Activated naive CD4-positive, alpha-beta T cell treated with anti-CD3 and anti-CD28 coated beads for 36 hours (primary cell): ENCODE measurements at regions of chr18 and their contacts with region 1.

Region 1: DNA sequence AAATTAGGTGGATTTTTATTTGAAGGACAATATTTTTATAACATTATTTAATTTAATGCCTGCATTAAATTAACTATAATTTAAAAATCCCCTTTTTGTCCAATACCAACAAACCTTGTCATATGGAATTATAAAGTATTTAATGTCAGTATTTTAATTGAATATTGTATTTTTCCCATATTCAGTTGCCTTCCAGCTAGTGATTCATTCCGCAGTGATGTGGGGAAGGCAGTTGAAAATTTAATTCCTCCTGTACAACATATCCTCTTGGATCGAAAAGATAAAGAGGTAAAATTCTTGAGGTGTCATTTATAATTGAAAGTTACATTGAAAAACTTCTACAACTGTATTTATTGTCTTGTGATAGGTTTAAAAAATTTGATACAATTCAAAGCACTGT is 40.4 kb downstream of the WDR7 start:
- DNase-seq: no peak
- H3K4me3 Mint-ChIP-seq: no peak overlapping the region
- H3K27ac Mint-ChIP-seq: no peak overlapping the region
- H3K4me1 Mint-ChIP-seq: no peaks in the 10 kb centered on the region
- H3K27me3 Mint-ChIP-seq: no peaks in the 10 kb centered on the region

Region 2: DNA sequence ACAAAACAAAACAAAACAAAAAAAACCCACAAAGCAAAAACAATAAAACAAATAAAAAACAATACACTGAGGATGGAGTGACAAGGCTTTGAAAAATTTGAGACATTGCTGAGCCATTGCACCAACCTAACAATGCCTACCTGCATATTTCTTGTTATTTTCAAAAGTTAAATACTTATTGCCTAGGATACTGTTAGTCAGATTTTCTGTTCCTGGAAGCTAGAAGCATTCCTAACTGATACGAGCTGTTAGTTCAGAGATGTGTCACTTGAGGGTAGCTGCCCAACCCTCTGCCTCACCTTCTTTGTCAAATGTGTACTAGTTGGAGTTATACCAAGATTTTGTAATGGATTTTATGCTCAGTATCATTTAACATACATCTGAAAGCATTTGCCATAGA is 240.3 kb before region 1 on chr18:
- CTCF ChIA-PET with region 1: no interaction called
- intact Hi-C with region 1: no loop called
- DNase-seq: no peak
- H3K4me3 Mint-ChIP-seq: no peak overlapping the region
- H3K27ac Mint-ChIP-seq: no peak overlapping the region
- H3K4me1 Mint-ChIP-seq: no peaks in the 10 kb centered on the region
- H3K27me3 Mint-ChIP-seq: peaks cover 3% of the 10 kb centered on the region

Region 3: DNA sequence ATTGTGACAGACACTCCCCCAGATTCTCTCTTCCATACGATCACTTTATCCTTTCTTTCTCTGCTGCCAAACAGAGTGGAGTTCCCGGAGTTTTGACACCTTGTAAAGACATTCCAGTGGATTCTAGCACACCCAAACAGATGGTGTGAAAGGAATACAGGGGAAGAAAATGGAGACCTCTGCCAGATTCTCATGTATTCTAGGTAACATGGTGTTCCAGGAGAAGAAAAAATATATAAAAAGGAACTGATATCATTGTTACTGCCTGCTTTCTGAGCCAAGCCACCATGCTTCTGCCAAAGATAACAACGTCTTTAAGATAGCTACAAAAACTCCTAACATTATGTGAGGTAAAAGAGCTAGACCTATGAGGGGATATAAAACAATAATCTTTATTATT is 189.6 kb before region 1 on chr18:
- CTCF ChIA-PET with region 1: no interaction called
- intact Hi-C with region 1: loop called (anchors 5 kb)
- DNase-seq: no peak
- H3K4me3 Mint-ChIP-seq: no peak overlapping the region
- H3K27ac Mint-ChIP-seq: no peak overlapping the region
- H3K4me1 Mint-ChIP-seq: no peaks in the 10 kb centered on the region
- H3K27me3 Mint-ChIP-seq: peaks cover 2% of the 10 kb centered on the region

Region 4: GRCh38 chr18:56676639-56677038 is 14.9 kb before region 1 on chr18:
- CTCF ChIA-PET with region 1: no interaction called
- intact Hi-C with region 1: no loop called
- DNase-seq: no peak
- H3K4me3 Mint-ChIP-seq: no peak overlapping the region
- H3K27ac Mint-ChIP-seq: no peak overlapping the region
- H3K4me1 Mint-ChIP-seq: peaks cover 2% of the 10 kb centered on the region
- H3K27me3 Mint-ChIP-seq: no peaks in the 10 kb centered on the region